SK-N-SH (cell line): ENCODE measurements at regions of chr11 and their contacts with region 1.

Region 1: GRCh38 chr11:96054870-96055705 is 131.2 kb upstream of the MTMR2 start:
- DNase-seq: peak; percentile 38
- H3K4me3 ChIP-seq: no peak overlapping the region
- H3K27ac ChIP-seq: peak overlapping the region; percentile 84 to 86
- H3K4me1 ChIP-seq: peaks cover 7 to 58% of the 10 kb centered on the region in 2 experiments
- H3K27me3 ChIP-seq: no peaks in the 10 kb centered on the region
- CTCF ChIP-seq: peak; percentile 73
- EP300 ChIP-seq: no peak
- RAD21 ChIP-seq: peak; percentile 79

Region 2: DNA sequence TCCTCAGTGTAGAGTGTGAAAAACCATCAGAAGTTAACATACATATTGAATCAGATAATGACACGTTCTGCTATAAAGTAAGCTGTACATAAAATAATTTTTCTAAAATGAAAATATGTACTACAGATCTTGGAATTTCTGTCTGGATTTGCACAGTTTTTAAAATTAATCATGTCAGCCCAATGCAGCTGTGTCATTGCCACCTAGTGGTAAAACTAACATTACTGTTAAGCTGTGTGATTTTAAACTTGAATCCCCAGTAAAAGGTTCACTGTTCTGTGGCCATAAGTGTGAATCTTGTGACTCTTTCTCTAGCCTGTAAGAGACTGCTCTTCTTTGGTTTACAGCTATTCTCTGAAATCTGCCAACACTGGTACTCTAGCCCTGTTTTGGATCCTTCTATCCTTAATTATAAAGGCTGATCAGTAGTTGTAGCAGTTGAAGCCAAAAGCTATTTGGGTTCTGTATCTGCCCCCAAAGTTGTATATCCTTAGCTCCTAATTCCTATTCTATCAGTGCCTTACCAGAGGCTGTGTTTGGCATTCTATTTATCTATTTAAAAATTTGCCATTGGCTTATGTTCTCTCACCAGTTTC is 338.8 kb after region 1 on chr11:
- CTCF ChIA-PET with region 1: interaction called, 11 read pairs
- POLR2A ChIA-PET with region 1: no interaction called
- DNase-seq: peak; percentile 45
- H3K4me3 ChIP-seq: peak overlapping the region in 1 of 2 experiments; percentile 25; a peak in 1 of 4 replicates
- H3K27ac ChIP-seq: peak overlapping the region; percentile 16 to 22; a peak in 3 of 4 replicates
- H3K4me1 ChIP-seq: peaks cover 11 to 14% of the 10 kb centered on the region in 2 experiments; a peak in 3 of 4 replicates
- H3K27me3 ChIP-seq: no peaks in the 10 kb centered on the region
- CTCF ChIP-seq: peak; percentile 81
- EP300 ChIP-seq: no peak
- RAD21 ChIP-seq: peak; percentile 72